ENCODE measurements at regions of chr11 and their contacts with region 1.

Region 1: GRCh38 chr11:126480410-126481302 is 125.2 kb downstream of the ST3GAL4 start:
- DNase-seq: peak; percentile 45 to 76 (median 65)
- ATAC-seq: peak; percentile 93
- H3K4me3 ChIP-seq: peak overlapping the region; percentile 31
- H3K4me3 Mint-ChIP-seq: peak overlapping the region; percentile 22 to 79 (median 68)
- H3K27ac ChIP-seq: no peak overlapping the region
- H3K27ac Mint-ChIP-seq: peak overlapping the region; percentile 35 to 88 (median 70)
- H3K4me1 ChIP-seq: peaks cover 0 to 13% of the 10 kb centered on the region in 2 donors
- H3K4me1 Mint-ChIP-seq: peaks cover 12 to 29% (median 19%) of the 10 kb centered on the region in 7 donors
- H3K27me3 ChIP-seq: no peaks in the 10 kb centered on the region
- H3K27me3 Mint-ChIP-seq: peaks cover 0 to 6% (median 0%) of the 10 kb centered on the region in 5 donors

Region 2: DNA sequence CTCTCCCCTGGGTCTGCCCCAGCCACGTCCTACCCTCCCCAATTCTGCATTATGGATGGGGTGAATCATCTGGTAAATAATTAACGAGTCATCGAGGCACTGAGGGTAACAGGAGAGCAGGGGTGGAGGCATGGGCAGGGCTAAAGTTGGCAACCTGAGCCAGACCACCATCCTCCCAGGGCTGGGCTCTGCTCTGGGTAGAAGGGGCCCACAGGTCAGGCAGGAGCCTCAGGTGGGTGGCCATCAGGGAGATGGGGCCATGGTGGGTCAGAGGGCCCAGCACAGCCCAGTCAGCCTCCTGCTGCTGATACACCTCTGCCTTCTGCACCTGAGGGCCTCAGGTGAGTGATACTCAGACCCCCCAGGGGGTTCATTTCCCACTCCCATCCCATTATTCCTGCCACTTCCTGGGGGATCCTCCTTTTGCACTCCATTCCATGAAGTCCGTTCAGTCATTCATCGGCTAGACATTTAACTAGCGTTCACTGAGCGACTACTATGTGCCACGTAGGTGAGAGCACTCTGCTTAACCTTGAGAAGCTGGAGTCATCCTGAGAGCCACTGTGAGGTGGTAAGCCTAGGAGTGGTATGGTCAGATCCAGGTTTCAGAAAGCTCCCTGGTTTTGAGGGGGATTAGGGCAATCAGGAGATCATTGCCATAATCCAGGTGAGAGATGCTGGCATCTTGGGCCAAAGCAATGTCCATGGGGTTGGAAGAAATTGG is 534.7 kb before region 1 on chr11 and contains the start of gene VSIG10L2:
- CTCF ChIA-PET with region 1: no interaction called
- POLR2A ChIA-PET with region 1: no interaction called
- intact Hi-C with region 1: no loop called
- DNase-seq: peak in 1 of 9 donors; percentile 8
- ATAC-seq: no peak
- H3K4me3 ChIP-seq: no peak within 1 kb of the TSS
- H3K4me3 Mint-ChIP-seq: no peak within 1 kb of the TSS
- H3K27ac ChIP-seq: no peak within 1 kb of the TSS
- H3K27ac Mint-ChIP-seq: no peak within 1 kb of the TSS
- H3K4me1 ChIP-seq: no peaks in the 10 kb centered on the region
- H3K4me1 Mint-ChIP-seq: peaks cover 2 to 10% (median 8%) of the 10 kb centered on the region in 7 donors
- H3K27me3 ChIP-seq: no peaks in the 10 kb centered on the region
- H3K27me3 Mint-ChIP-seq: peaks cover 0 to 4% (median 0%) of the 10 kb centered on the region in 5 donors
- total RNA-seq, gene VSIG10L2: not detected

Region 3: DNA sequence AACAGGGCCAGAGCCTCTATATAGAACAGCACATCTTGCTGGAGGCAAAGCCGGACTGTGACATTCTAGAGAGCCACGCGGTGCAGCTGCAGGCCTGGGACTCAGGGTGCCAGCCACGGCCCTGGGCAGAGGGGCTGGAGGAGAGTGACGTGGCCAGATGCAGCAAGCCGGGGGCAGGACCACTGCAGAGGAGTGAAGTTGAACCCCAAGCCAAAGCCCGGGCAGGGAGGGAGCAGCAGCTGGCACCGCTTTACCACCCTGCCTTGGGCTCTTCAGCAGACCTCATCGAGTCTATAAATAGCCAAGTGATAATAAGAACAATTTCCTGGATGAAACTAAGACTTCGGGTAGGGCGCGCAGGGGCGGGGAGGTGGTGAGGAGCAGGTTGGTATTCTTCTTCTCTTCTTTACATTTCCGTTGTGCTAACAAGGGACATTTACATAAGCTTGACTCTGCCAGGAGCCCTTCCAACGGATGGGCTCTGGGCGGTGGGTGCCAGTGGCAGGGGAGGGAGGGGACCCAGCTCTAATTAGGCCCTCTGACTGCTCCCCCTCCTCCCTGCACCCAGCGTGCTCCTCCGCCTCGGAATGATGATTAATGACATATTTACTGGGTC is 15.0 kb before region 1 on chr11:
- CTCF ChIA-PET with region 1: interaction called, 18 read pairs
- POLR2A ChIA-PET with region 1: interaction called, 3 read pairs
- intact Hi-C with region 1: loop called in 1 of 2 experiments (anchors 1 kb)
- DNase-seq: peak in 5 of 9 donors; percentile 19 to 33 (median 28)
- ATAC-seq: peak; percentile 50
- H3K4me3 ChIP-seq: no peak overlapping the region
- H3K4me3 Mint-ChIP-seq: peak overlapping the region; percentile 42 to 75 (median 60)
- H3K27ac ChIP-seq: no peak overlapping the region
- H3K27ac Mint-ChIP-seq: peak overlapping the region in 8 of 9 donors; percentile 11 to 85 (median 50)
- H3K4me1 ChIP-seq: peaks cover 0 to 12% of the 10 kb centered on the region in 2 donors
- H3K4me1 Mint-ChIP-seq: peaks cover 10 to 30% (median 24%) of the 10 kb centered on the region in 7 donors
- H3K27me3 ChIP-seq: no peaks in the 10 kb centered on the region
- H3K27me3 Mint-ChIP-seq: peaks cover 0 to 3% (median 0%) of the 10 kb centered on the region in 5 donors

Region 4: GRCh38 chr11:126612671-126613070 is 132.0 kb after region 1 on chr11:
- CTCF ChIA-PET with region 1: no interaction called
- POLR2A ChIA-PET with region 1: no interaction called
- intact Hi-C with region 1: no loop called
- DNase-seq: no peak
- ATAC-seq: no peak
- H3K4me3 ChIP-seq: no peak overlapping the region
- H3K4me3 Mint-ChIP-seq: no peak overlapping the region
- H3K27ac ChIP-seq: no peak overlapping the region
- H3K27ac Mint-ChIP-seq: no peak overlapping the region
- H3K4me1 ChIP-seq: no peaks in the 10 kb centered on the region
- H3K4me1 Mint-ChIP-seq: no peaks in the 10 kb centered on the region
- H3K27me3 ChIP-seq: no peaks in the 10 kb centered on the region
- H3K27me3 Mint-ChIP-seq: peaks cover 2 to 16% (median 10%) of the 10 kb centered on the region in 5 donors